ENCODE measurements at regions of chr4 and their contacts with region 1.

Region 1: DNA sequence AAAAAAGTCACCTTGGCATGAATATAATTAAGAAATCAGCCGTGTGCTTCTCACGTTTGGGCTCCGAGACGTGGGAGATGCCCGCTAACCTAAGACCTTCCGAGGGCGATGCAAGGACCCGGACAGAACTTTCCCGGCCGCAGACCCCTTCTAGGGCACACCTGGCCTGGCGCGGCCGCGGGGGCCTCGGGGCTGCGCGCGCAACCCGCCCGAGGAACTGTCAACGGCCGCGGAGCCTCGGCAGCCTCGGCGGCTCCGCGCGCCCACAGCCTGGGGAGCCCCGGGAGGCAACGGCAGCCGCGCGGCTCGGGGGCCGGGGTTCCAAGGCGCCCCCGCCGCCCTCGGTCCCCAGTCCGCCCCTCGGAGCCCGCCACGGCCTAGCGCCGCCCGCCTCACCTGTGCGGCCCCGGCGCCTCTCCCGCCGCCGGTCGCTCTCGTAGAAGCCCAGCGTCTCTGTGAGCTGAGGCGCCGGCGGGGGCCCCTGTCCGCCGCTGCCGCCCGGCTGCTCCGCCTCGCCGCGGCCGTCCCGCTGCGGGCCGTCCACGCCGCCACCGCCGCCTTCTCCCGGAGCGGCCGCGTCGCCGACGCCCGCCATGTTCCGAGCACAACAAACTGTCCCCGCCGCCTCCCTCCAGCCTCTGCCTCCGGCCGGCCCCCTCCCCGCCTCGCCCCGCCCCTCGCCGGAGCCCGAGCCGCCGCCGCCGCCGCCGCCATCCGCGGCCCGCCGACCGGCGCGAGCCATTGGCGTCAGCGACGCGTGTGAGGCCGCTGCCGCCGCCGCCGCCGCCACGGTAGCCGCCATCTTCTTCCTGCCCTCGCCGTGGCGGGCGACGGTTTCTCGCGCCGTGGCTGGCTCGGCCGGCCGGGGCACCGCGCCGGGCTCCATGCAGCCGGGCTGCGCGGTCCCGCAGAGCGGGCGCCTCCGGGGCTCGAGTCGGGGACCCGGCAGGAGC is at the start of gene TAPT1:
- DNase-seq: peak; percentile 70 to 80 (median 72)
- H3K4me3 ChIP-seq: peak within 1 kb of the TSS; percentile 67 to 97
- H3K4me3 Mint-ChIP-seq: peak within 1 kb of the TSS; percentile 92 to 97 (median 93)
- H3K27ac ChIP-seq: peak within 1 kb of the TSS; percentile 69
- H3K27ac Mint-ChIP-seq: peak within 1 kb of the TSS; percentile 96 to 97 (median 96)
- H3K4me1 ChIP-seq: peaks cover 50% of the 10 kb centered on the region
- H3K4me1 Mint-ChIP-seq: peaks cover 36 to 72% (median 47%) of the 10 kb centered on the region in 4 donors
- H3K27me3 ChIP-seq: no peaks in the 10 kb centered on the region
- H3K27me3 Mint-ChIP-seq: no peaks in the 10 kb centered on the region
- total RNA-seq, gene TAPT1: 55.1 to 57.5 TPM

Region 2: GRCh38 chr4:15655229-15656037 is 570.7 kb before region 1 on chr4 and contains the start of gene FBXL5:
- CTCF ChIA-PET with region 1: no interaction called
- POLR2A ChIA-PET with region 1: no interaction called
- intact Hi-C with region 1: loop called (anchors 2 kb)
- DNase-seq: peak; percentile 79 to 91 (median 87)
- H3K4me3 ChIP-seq: peak within 1 kb of the TSS; percentile 37 to 94
- H3K4me3 Mint-ChIP-seq: peak within 1 kb of the TSS; percentile 94 to 98 (median 97)
- H3K27ac ChIP-seq: peak within 1 kb of the TSS; percentile 88
- H3K27ac Mint-ChIP-seq: peak within 1 kb of the TSS; percentile 96 to 99 (median 98)
- H3K4me1 ChIP-seq: peaks cover 45% of the 10 kb centered on the region
- H3K4me1 Mint-ChIP-seq: peaks cover 32 to 57% (median 38%) of the 10 kb centered on the region in 4 donors
- H3K27me3 ChIP-seq: no peaks in the 10 kb centered on the region
- H3K27me3 Mint-ChIP-seq: no peaks in the 10 kb centered on the region
- total RNA-seq, gene FBXL5: 62.2 to 62.8 TPM

Region 3: GRCh38 chr4:15778289-15779241 is 447.6 kb before region 1 on chr4 and contains the start of gene CD38:
- CTCF ChIA-PET with region 1: no interaction called
- POLR2A ChIA-PET with region 1: no interaction called
- intact Hi-C with region 1: loop called (anchors 10 kb)
- DNase-seq: peak in 4 of 5 donors; percentile 33 to 51 (median 45)
- H3K4me3 ChIP-seq: peak within 1 kb of the TSS; percentile 48
- H3K4me3 Mint-ChIP-seq: peak within 1 kb of the TSS; percentile 78 to 91 (median 88)
- H3K27ac ChIP-seq: no peak within 1 kb of the TSS
- H3K27ac Mint-ChIP-seq: peak within 1 kb of the TSS in 5 of 7 donors; percentile 20 to 79 (median 47)
- H3K4me1 ChIP-seq: peaks cover 34% of the 10 kb centered on the region
- H3K4me1 Mint-ChIP-seq: peaks cover 29 to 50% (median 40%) of the 10 kb centered on the region in 4 donors
- H3K27me3 ChIP-seq: no peaks in the 10 kb centered on the region
- H3K27me3 Mint-ChIP-seq: peaks cover 0 to 2% of the 10 kb centered on the region in 2 donors
- total RNA-seq, gene CD38: 1.00 to 1.7 TPM

Region 4: GRCh38 chr4:16264798-16265197 is 38.7 kb after region 1 on chr4:
- CTCF ChIA-PET with region 1: no interaction called
- POLR2A ChIA-PET with region 1: no interaction called
- intact Hi-C with region 1: loop called (anchors 2 kb)
- DNase-seq: peak in 4 of 5 donors; percentile 35 to 47 (median 39)
- H3K4me3 ChIP-seq: no peak overlapping the region
- H3K4me3 Mint-ChIP-seq: no peak overlapping the region
- H3K27ac ChIP-seq: no peak overlapping the region
- H3K27ac Mint-ChIP-seq: no peak overlapping the region
- H3K4me1 ChIP-seq: peaks cover 6% of the 10 kb centered on the region
- H3K4me1 Mint-ChIP-seq: peaks cover 7 to 10% (median 9%) of the 10 kb centered on the region in 4 donors
- H3K27me3 ChIP-seq: no peaks in the 10 kb centered on the region
- H3K27me3 Mint-ChIP-seq: no peaks in the 10 kb centered on the region

Region 5: DNA sequence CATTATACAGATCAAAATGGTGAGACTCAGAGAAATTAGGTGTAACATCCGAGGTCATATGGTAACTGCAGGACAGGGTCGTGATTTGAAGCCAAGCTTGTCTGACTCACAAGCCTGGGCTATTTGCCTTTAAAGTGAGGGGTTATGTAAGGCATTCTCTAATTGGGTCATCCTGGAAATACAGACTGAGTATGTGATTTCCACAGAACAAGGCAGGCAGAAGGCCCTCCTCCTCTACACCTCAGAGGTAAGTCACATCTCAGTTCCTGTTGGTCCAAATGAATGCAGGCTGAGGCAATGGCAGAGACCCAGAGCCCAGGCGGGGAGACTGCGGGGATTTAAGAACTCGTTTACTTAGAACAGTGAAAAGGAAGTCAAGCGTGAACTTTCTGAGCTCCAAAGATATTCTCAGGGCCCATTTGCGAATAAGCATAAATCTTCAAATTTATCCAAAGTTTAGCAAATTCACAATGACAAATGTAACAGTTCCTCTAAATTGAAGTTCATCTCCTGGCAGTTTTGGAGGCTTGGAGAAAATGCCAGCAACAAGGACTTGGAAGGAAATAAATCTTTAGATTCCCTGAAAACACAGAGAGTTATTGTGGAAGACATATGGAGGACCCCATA is 519.0 kb after region 1 on chr4:
- CTCF ChIA-PET with region 1: no interaction called
- POLR2A ChIA-PET with region 1: no interaction called
- intact Hi-C with region 1: no loop called
- DNase-seq: no peak
- H3K4me3 ChIP-seq: no peak overlapping the region
- H3K4me3 Mint-ChIP-seq: no peak overlapping the region
- H3K27ac ChIP-seq: no peak overlapping the region
- H3K27ac Mint-ChIP-seq: no peak overlapping the region
- H3K4me1 ChIP-seq: no peaks in the 10 kb centered on the region
- H3K4me1 Mint-ChIP-seq: no peaks in the 10 kb centered on the region
- H3K27me3 ChIP-seq: no peaks in the 10 kb centered on the region
- H3K27me3 Mint-ChIP-seq: no peaks in the 10 kb centered on the region

Region 6: DNA sequence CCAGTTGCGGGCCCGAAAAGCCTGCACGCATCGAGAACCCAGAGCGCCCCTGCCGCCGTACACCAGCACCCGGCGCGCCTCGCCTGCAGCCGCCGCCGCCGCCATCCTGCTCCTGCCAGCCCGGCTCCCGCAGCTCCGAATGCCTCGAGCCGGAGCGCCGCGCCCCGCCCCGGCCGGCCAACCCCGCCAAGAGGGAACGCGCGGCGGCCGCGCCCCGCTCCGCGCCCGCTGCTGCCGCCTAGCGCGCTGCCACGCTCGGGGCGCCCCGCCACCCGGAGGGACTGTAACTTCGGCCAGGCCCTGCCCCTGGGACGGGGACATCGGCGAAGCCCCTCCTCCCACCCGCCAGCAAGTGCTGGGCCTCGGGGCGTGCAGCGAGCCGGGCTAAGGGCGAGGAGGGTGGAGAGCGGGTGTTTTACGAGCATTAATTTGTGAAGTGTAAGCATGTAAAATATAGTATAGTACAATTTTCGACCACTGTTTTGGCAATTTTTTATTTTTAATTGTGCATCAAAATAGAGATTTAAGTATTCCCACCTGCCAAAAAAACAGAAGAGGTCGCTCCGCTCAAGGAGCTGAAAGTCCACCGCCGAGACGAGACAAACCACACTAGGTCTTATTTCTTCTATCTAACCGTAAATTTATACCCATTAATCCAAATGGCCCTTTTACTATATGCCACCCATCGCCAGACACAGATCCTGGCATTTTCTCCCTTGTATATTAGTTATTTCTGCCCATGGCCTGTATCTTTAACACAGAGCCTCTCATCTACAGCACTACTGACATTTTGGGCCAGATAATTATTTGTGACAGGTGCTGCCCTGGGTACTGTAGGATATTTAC is 1286.0 kb after region 1 on chr4 and contains the start of gene QDPR:
- CTCF ChIA-PET with region 1: no interaction called
- POLR2A ChIA-PET with region 1: no interaction called
- intact Hi-C with region 1: loop called (anchors 5 kb)
- DNase-seq: peak; percentile 60 to 70 (median 70)
- H3K4me3 ChIP-seq: peak within 1 kb of the TSS; percentile 38 to 75
- H3K4me3 Mint-ChIP-seq: peak within 1 kb of the TSS; percentile 96 to 100 (median 98)
- H3K27ac ChIP-seq: peak within 1 kb of the TSS; percentile 46
- H3K27ac Mint-ChIP-seq: peak within 1 kb of the TSS; percentile 74 to 96 (median 91)
- H3K4me1 ChIP-seq: peaks cover 28% of the 10 kb centered on the region
- H3K4me1 Mint-ChIP-seq: peaks cover 23 to 32% (median 30%) of the 10 kb centered on the region in 4 donors
- H3K27me3 ChIP-seq: no peaks in the 10 kb centered on the region
- H3K27me3 Mint-ChIP-seq: peaks cover 9% of the 10 kb centered on the region in 2 donors
- total RNA-seq, gene QDPR: 21.8 to 24.4 TPM

Region 7: GRCh38 chr4:18021722-18022571 is 1795.8 kb after region 1 on chr4 and contains the start of gene LCORL:
- CTCF ChIA-PET with region 1: no interaction called
- POLR2A ChIA-PET with region 1: no interaction called
- intact Hi-C with region 1: loop called (anchors 10 kb)
- DNase-seq: peak; percentile 84 to 91 (median 87)
- H3K4me3 ChIP-seq: peak within 1 kb of the TSS; percentile 68 to 87
- H3K4me3 Mint-ChIP-seq: peak within 1 kb of the TSS; percentile 92 to 98 (median 96)
- H3K27ac ChIP-seq: peak within 1 kb of the TSS; percentile 61
- H3K27ac Mint-ChIP-seq: peak within 1 kb of the TSS; percentile 86 to 97 (median 90)
- H3K4me1 ChIP-seq: peaks cover 24% of the 10 kb centered on the region
- H3K4me1 Mint-ChIP-seq: peaks cover 12 to 33% (median 20%) of the 10 kb centered on the region in 4 donors
- H3K27me3 ChIP-seq: peaks cover 4% of the 10 kb centered on the region
- H3K27me3 Mint-ChIP-seq: peaks cover 6 to 26% of the 10 kb centered on the region in 2 donors
- total RNA-seq, gene LCORL: 11.3 to 14.5 TPM